ENCODE measurements at regions of chr1 and their contacts with region 1.

Region 1: GRCh38 chr1:52702886-52703787 is 5.0 kb upstream of the COA7 start:
- DNase-seq: peak; percentile 62 to 89 (median 83)
- ATAC-seq: peak; percentile 95
- H3K4me3 ChIP-seq: peak overlapping the region; percentile 52
- H3K4me3 Mint-ChIP-seq: peak overlapping the region; percentile 75 to 96 (median 92)
- H3K27ac ChIP-seq: peak overlapping the region; percentile 83
- H3K27ac Mint-ChIP-seq: peak overlapping the region; percentile 97 to 99 (median 99)
- H3K4me1 ChIP-seq: peaks cover 6% of the 10 kb centered on the region in 2 donors
- H3K4me1 Mint-ChIP-seq: peaks cover 21 to 46% (median 32%) of the 10 kb centered on the region in 7 donors
- H3K27me3 ChIP-seq: no peaks in the 10 kb centered on the region
- H3K27me3 Mint-ChIP-seq: peaks cover 0 to 12% (median 0%) of the 10 kb centered on the region in 5 donors

Region 2: GRCh38 chr1:52636721-52637695 is 66.1 kb before region 1 on chr1:
- CTCF ChIA-PET with region 1: no interaction called
- POLR2A ChIA-PET with region 1: interaction called, 3 read pairs
- intact Hi-C with region 1: loop called in 1 of 2 experiments (anchors 1 kb)
- DNase-seq: peak; percentile 39 to 88 (median 83)
- ATAC-seq: peak; percentile 79
- H3K4me3 ChIP-seq: peak overlapping the region; percentile 19
- H3K4me3 Mint-ChIP-seq: peak overlapping the region; percentile 78 to 94 (median 86)
- H3K27ac ChIP-seq: peak overlapping the region; percentile 95
- H3K27ac Mint-ChIP-seq: peak overlapping the region; percentile 96 to 100 (median 99)
- H3K4me1 ChIP-seq: peaks cover 63 to 82% of the 10 kb centered on the region in 2 donors
- H3K4me1 Mint-ChIP-seq: peaks cover 52 to 85% (median 79%) of the 10 kb centered on the region in 7 donors
- H3K27me3 ChIP-seq: no peaks in the 10 kb centered on the region
- H3K27me3 Mint-ChIP-seq: peaks cover 0 to 11% (median 0%) of the 10 kb centered on the region in 5 donors

Region 3: GRCh38 chr1:52748119-52748518 is 45.0 kb after region 1 on chr1:
- CTCF ChIA-PET with region 1: no interaction called
- POLR2A ChIA-PET with region 1: no interaction called
- intact Hi-C with region 1: loop called (anchors 1 kb)
- DNase-seq: no peak
- ATAC-seq: no peak
- H3K4me3 ChIP-seq: no peak overlapping the region
- H3K4me3 Mint-ChIP-seq: no peak overlapping the region
- H3K27ac ChIP-seq: no peak overlapping the region
- H3K27ac Mint-ChIP-seq: no peak overlapping the region
- H3K4me1 ChIP-seq: peaks cover 0 to 3% of the 10 kb centered on the region in 2 donors
- H3K4me1 Mint-ChIP-seq: peaks cover 4 to 57% (median 38%) of the 10 kb centered on the region in 7 donors
- H3K27me3 ChIP-seq: no peaks in the 10 kb centered on the region
- H3K27me3 Mint-ChIP-seq: no peaks in the 10 kb centered on the region

Region 4: DNA sequence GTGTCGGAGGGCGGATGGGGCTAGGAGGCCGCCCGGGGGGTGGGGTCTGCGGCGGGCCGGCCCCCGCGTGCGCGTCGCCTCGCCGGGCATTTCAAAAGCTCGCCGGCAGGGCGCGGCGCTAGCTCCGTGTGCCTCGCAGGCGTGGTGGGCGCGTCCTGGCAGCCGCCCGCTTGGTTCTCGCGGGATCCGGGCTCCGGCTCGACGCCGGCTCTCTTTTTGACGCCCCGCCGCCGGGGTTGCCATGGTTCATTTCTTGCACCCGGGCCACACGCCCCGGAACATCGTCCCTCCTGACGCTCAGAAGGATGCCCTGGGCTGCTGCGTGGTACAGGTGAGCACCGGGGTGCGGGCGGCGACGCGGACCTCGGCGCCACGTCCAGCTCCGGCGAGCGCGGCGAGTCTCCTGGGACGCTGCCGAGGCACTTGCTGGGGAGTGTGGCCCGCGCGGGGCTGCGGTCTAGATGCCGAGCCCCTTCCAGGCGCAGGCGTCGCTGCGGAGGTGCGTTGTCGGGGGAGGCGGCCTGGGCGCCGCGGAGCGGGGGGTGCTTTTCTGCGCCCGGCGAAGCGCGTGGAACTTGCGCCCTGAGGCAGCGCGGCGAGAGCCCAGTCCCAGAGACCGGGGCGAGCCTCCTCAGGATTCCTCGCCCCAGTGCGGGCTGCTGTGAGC is 139.6 kb after region 1 on chr1 and contains the start of gene ZYG11A:
- CTCF ChIA-PET with region 1: no interaction called
- POLR2A ChIA-PET with region 1: no interaction called
- intact Hi-C with region 1: loop called in 1 of 2 experiments (anchors 5 kb)
- DNase-seq: peak; percentile 50 to 78 (median 72)
- ATAC-seq: peak; percentile 97
- H3K4me3 ChIP-seq: peak within 1 kb of the TSS; percentile 23
- H3K4me3 Mint-ChIP-seq: peak within 1 kb of the TSS; percentile 60 to 78 (median 74)
- H3K27ac ChIP-seq: no peak within 1 kb of the TSS
- H3K27ac Mint-ChIP-seq: peak within 1 kb of the TSS in 1 of 9 donors; percentile 46
- H3K4me1 ChIP-seq: peaks cover 0 to 6% of the 10 kb centered on the region in 2 donors
- H3K4me1 Mint-ChIP-seq: peaks cover 0 to 9% (median 6%) of the 10 kb centered on the region in 7 donors
- H3K27me3 ChIP-seq: peaks cover 3 to 7% of the 10 kb centered on the region in 2 donors
- H3K27me3 Mint-ChIP-seq: peaks cover 33 to 38% (median 35%) of the 10 kb centered on the region in 5 donors
- total RNA-seq, gene ZYG11A: 0.07 to 0.27 (median 0.12) TPM in 3 of 5 experiments, not detected in the others

Region 5: DNA sequence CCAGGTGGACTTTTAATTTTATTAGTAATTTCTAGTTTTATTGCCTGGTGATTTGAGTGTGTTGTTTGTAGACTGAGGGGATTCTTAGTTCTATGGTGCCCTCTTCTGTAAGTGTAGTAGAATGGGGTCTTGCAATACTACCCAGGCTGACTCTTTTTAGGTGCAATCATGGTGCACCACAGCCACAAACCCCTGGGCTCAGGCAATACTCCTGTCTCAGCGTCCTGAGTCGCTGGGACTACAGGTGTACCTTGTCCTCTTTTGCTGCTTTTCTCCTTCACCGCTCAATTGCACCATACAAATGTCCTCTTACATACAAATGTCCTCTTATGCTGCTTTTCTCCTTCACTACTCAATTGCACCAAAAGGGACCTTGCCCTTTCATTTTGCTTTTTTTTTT is 267.0 kb after region 1 on chr1:
- CTCF ChIA-PET with region 1: no interaction called
- POLR2A ChIA-PET with region 1: no interaction called
- intact Hi-C with region 1: loop called in 1 of 2 experiments (anchors 1 kb)
- DNase-seq: peak in 3 of 9 donors; percentile 1 to 19 (median 12)
- ATAC-seq: no peak
- H3K4me3 ChIP-seq: no peak overlapping the region
- H3K4me3 Mint-ChIP-seq: no peak overlapping the region
- H3K27ac ChIP-seq: no peak overlapping the region
- H3K27ac Mint-ChIP-seq: peak overlapping the region in 1 of 9 donors; percentile 58
- H3K4me1 ChIP-seq: no peaks in the 10 kb centered on the region
- H3K4me1 Mint-ChIP-seq: peaks cover 0 to 2% (median 0%) of the 10 kb centered on the region in 7 donors
- H3K27me3 ChIP-seq: no peaks in the 10 kb centered on the region
- H3K27me3 Mint-ChIP-seq: no peaks in the 10 kb centered on the region

Region 6: DNA sequence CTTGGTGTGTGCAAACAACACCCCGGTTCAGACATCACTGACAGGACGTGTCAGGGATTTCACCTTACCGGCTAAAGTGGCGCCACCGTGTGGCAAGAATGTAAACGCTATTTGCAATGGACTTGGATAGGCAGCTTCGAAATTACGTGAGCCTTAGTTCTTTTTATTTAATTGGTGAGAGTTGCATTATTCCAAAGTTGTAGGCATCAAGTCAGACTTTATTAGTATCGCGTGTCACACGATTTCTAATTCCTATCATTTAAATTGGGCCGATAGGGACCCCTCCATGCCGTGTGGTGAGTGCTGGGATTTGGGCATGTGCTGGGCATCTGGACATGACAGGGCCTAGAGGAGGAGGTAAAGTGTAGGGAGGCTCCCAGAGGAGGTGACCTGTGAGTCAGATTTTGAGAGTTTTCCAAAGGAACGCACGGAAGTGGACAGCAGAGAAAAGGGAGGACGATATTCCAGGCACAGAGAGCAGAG is 479.0 kb after region 1 on chr1:
- CTCF ChIA-PET with region 1: interaction called, 3 read pairs
- POLR2A ChIA-PET with region 1: no interaction called
- intact Hi-C with region 1: loop called (anchors 1 kb)
- DNase-seq: peak; percentile 44 to 76 (median 69)
- ATAC-seq: peak; percentile 90
- H3K4me3 ChIP-seq: no peak overlapping the region
- H3K4me3 Mint-ChIP-seq: no peak overlapping the region
- H3K27ac ChIP-seq: no peak overlapping the region
- H3K27ac Mint-ChIP-seq: no peak overlapping the region
- H3K4me1 ChIP-seq: no peaks in the 10 kb centered on the region
- H3K4me1 Mint-ChIP-seq: no peaks in the 10 kb centered on the region
- H3K27me3 ChIP-seq: no peaks in the 10 kb centered on the region
- H3K27me3 Mint-ChIP-seq: peaks cover 4 to 25% (median 6%) of the 10 kb centered on the region in 5 donors